ENCODE measurements at regions of chr10 and their contacts with region 1.

Region 1: DNA sequence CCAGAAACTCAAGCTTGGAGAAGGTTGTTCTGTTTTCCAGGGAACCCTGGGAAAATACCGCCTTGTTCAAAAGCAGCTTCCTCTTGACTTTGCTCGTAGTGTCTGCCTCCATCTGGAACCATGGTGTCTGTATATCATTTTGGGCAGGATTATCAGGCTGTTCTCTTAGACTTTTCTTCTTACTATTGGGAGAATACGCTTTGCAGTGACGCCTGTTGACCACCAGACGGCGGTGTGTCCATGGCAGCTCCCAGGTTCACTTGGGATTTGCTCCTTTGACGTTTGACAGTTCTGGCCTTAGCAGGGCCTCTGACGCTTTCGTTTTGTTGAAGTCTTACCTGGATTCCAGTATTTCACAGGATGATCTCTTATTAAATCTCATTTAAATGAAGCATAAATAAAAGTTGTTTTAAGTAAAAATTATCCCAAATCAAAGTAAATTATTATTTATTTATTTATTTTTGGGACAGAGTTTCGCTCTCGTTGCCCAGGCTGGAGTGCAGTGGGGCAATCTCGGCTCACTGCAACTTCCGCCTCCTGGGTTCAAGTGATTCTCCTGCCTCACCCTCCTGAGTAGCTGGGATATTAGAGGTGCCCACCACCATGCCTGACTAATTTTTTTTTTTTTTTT is 41.8 kb upstream of the GJD4 start:
- DNase-seq: peak; percentile 49
- ATAC-seq: peak; percentile 89
- H3K4me3 ChIP-seq: no peak overlapping the region
- H3K27ac ChIP-seq: no peak overlapping the region
- H3K4me1 ChIP-seq: no peaks in the 10 kb centered on the region
- H3K27me3 ChIP-seq: no peaks in the 10 kb centered on the region
- CTCF ChIP-seq: peak; percentile 56 to 100 (median 99)
- POLR2A ChIP-seq: no peak
- RAD21 ChIP-seq: peak; percentile 59

Region 2: GRCh38 chr10:35119378-35119777 is 444.0 kb before region 1 on chr10:
- CTCF ChIA-PET with region 1: interaction called, 5 read pairs
- POLR2A ChIA-PET with region 1: no interaction called
- RAD21 ChIA-PET with region 1: no interaction called
- intact Hi-C with region 1: loop called (anchors 2 kb)
- DNase-seq: no peak
- ATAC-seq: no peak
- H3K4me3 ChIP-seq: no peak overlapping the region
- H3K27ac ChIP-seq: no peak overlapping the region
- H3K4me1 ChIP-seq: no peaks in the 10 kb centered on the region
- H3K27me3 ChIP-seq: no peaks in the 10 kb centered on the region
- CTCF ChIP-seq: no peak
- POLR2A ChIP-seq: no peak
- RAD21 ChIP-seq: no peak

Region 3: DNA sequence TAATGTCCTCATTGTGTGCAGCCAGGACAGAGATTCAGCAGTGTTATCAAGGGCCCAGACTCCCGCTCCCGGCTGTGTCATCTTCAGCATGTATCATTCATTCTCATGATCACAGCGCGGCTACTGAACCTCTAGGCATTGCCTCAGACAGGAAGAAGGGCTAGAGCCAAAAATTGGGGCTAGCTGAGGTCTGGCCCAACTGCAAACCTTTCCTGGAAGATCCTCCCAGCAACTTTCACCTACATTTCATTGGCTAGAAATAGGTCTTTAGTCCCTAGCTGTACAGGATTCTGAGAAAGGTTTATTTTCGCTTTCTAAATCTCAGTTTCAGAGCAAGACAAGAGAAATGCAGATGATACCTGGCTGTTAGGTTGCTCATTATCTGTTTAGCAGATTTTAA is 354.8 kb before region 1 on chr10:
- CTCF ChIA-PET with region 1: no interaction called
- POLR2A ChIA-PET with region 1: no interaction called
- RAD21 ChIA-PET with region 1: no interaction called
- intact Hi-C with region 1: no loop called
- DNase-seq: no peak
- ATAC-seq: no peak
- H3K4me3 ChIP-seq: no peak overlapping the region
- H3K27ac ChIP-seq: no peak overlapping the region
- H3K4me1 ChIP-seq: 0 out of 4 replicates have a peak, but pooled peaks cover 0 to 2% of the 10 kb centered on the region in 2 experiments
- H3K27me3 ChIP-seq: no peaks in the 10 kb centered on the region
- CTCF ChIP-seq: no peak
- POLR2A ChIP-seq: no peak
- RAD21 ChIP-seq: no peak

Region 4: DNA sequence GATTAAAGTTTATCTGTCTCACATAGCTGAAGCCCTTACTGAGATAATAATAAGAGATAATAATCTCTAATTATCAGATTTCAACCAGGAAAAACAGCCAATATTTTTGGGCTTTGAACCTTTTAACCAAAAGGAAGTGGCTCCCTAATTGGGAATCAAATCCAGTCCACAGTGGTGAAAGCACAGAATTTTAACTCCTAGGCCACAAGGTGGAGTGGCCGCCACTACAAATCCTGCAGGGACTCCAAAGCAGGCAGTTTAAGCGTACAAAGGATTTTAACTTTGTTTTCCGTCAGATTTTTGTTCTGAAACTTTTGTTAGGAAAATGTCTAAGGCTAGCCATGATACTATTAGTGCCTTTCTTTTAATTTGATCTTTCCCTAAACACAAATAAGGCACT is 326.6 kb before region 1 on chr10:
- CTCF ChIA-PET with region 1: no interaction called
- POLR2A ChIA-PET with region 1: no interaction called
- RAD21 ChIA-PET with region 1: no interaction called
- intact Hi-C with region 1: loop called (anchors 2 kb)
- DNase-seq: no peak
- ATAC-seq: peak; percentile 73
- H3K4me3 ChIP-seq: no peak overlapping the region
- H3K27ac ChIP-seq: no peak overlapping the region
- H3K4me1 ChIP-seq: no peaks in the 10 kb centered on the region; a peak in 1 of 4 replicates
- H3K27me3 ChIP-seq: no peaks in the 10 kb centered on the region
- CTCF ChIP-seq: peak; percentile 31 to 47 (median 33); a peak in 4 of 6 replicates
- POLR2A ChIP-seq: no peak
- RAD21 ChIP-seq: peak; percentile 58

Region 5: DNA sequence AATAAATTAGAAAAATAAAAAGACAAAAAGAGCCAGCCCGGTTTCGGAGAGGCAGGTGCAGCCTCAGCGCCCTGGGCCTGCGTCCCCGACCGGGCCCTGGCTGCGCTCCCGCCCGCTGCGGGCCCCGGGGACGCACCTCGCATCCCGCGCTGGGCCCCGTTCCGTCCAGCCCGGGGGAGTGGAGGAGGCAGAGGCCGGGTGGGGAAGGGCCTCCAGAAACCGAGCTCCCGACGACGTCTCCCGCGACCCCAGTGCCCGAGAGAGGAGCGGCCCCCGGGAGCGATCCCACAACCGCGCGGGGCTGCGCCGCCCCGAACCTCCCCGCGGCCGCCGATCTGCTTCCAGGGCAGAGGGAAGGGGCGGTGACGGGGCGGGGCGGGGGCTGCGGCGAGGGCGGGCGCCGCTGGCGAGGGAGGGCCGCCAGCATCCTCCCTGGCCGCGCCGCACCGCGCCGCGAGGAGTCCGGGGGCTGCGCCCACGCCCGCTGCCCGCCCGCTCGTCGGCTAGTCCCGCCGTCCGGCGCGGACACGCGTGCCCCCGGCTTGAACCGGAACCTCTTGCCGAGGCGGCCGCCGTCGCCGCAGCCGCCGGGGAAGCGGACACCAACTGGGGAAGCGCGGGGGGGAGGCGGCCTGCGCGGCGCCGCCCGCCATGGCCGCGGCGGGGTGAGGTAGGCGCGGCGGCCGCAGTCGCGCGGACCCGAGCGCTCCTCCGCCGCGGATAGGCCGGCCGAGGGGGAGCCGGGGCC is 227.1 kb before region 1 on chr10 and contains the start of gene CCNY:
- CTCF ChIA-PET with region 1: no interaction called
- POLR2A ChIA-PET with region 1: no interaction called
- RAD21 ChIA-PET with region 1: no interaction called
- intact Hi-C with region 1: loop called (anchors 5 kb)
- DNase-seq: no peak
- ATAC-seq: peak; percentile 83
- H3K4me3 ChIP-seq: peak within 1 kb of the TSS; percentile 79 to 87
- H3K27ac ChIP-seq: peak within 1 kb of the TSS; percentile 84
- H3K4me1 ChIP-seq: peaks cover 28 to 60% of the 10 kb centered on the region in 2 experiments
- H3K27me3 ChIP-seq: no peaks in the 10 kb centered on the region
- CTCF ChIP-seq: no peak
- POLR2A ChIP-seq: peak; percentile 65
- RAD21 ChIP-seq: no peak
- total RNA-seq, gene CCNY: 62.2 TPM

Region 6: GRCh38 chr10:35546824-35547273 is 16.5 kb before region 1 on chr10:
- CTCF ChIA-PET with region 1: interaction called, 17 read pairs
- POLR2A ChIA-PET with region 1: no interaction called
- RAD21 ChIA-PET with region 1: no interaction called
- intact Hi-C with region 1: no loop called
- DNase-seq: no peak
- ATAC-seq: no peak
- H3K4me3 ChIP-seq: no peak overlapping the region
- H3K27ac ChIP-seq: no peak overlapping the region
- H3K4me1 ChIP-seq: no peaks in the 10 kb centered on the region; a peak in 1 of 4 replicates
- H3K27me3 ChIP-seq: no peaks in the 10 kb centered on the region
- CTCF ChIP-seq: 0 out of 6 replicates have a peak, but pooled peaks of 1 of the 3 experiments have one; percentile 14
- POLR2A ChIP-seq: no peak
- RAD21 ChIP-seq: no peak